ENCODE measurements at regions of chr4 and their contacts with region 1.

Region 1: DNA sequence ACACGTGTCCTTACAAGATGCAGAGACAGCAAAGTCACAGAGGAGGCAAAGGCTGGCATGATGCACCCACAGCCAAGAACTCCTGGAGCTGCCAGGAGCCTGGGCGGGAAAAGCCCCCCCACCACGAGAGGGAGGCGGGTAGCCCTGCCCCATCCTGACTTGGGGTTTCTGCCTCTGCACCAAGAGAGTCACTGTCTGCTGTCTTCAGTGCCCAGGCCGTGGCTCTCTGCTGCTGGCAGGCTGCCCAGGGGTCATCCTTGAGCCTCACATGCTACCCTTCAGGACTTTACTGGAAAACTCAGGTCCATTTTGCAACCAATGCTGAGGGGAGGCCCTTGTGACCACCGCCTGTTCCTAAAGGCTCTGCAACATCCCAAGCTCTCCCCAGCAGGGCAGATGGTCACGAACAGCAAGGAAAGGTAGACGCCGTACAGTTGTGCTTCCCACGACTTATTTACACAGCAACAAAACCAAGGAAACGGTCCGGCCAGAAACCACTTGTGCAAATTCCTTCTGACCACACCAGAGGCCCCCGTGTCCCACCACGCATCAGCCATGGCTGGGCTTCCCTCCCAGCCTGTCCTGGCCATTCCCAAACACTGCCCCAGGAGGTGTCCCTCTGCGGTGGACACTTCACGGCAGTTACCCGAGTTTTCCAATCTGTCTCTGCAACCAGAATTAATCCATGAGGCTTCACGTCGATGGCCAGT is 56.9 kb downstream of the ACOX3 start:
- DNase-seq: no peak

Region 2: DNA sequence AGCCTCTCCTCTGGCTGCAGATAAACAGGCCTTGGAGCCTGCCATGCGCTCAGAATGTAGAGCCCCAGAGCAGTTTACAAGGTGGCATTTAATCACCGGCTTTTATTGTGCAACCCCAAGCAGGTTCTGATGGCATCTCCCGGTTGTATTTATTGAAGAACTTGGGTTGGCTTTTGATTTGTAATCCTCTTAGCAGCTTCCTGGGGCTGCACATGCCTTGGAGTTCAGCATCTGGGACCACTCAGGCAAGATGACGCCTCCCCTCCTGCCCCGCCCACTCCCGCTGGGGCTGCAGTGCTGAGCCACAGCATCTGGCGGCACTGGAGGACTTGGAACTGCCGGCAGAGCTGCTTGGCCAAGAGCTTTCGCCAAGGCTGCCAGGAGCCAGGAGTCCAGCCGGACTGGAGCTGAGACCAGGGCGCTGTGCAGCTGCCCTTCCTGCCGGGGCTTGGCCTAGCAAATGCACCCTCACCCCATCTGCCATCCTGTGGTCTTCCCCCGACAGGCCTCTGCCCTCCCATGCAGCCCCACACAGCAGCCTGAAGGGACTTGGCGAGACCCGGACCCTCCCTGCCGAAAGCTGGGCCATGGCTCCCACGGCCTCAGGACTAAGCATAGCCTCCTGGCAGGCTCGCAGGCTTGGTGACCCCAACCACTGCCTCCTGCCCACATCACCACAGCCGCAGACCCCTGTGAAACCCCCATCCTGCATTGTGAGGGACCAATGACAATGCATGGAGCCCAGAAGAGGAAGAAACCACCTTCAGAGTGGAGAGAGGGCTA is 108.7 kb before region 1 on chr4:
- intact Hi-C with region 1: no loop called
- DNase-seq: peak; percentile 61 to 88 (median 78)

Region 3: DNA sequence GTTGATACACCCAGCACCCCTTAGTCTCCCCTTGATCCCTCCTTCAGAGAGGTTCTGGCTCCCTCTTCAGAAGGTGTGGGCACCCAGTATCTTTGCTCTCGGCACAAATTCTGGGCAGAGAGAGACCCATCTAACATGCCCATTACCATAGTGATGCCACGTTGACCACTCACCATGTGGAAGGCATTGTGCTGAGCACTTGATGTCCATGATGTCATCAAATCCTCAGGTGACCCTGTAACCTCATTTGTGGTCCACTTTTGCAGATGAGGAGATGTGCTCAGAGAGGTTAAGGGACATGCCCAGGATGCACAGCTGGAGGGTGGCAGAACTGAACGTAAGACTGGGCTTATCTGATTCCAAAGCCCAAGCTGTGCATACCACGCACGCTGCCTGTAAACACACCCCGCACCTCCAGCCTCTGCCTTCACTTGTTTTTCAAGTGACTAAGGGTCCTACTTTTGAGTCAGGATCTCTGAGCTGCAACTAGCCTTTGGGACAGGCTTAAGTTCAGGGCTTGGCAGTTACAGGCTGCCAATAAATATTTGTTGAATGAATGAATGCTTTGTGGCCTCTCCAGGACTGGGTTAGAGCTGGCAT is 58.9 kb before region 1 on chr4:
- intact Hi-C with region 1: loop called (anchors 5 kb)
- DNase-seq: peak in 6 of 42 donors; percentile 1 to 9 (median 6)

Measured in head of caudate nucleus (tissue), 42 donors.